ENCODE measurements at regions of chr2 and their contacts with region 1.

Region 1: DNA sequence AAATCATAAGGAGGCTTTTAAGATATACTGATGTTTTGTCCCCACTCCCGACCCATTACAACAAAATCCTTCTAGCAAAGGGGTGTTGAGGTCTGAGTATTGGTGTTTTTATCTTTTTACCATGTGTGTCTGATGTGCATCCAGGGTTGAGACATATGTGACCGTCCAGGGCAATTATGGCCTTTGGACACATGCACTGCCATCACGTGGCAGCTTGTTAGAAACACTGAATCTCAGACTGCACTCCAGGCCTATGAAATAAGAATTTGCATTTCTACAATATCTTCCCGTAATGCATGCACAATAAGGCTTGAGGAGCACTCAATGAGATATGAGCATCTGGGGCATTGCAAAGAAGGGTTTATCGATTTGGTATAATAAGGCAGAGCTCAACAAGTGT is 235.1 kb upstream of the ZNF804A start:
- DNase-seq: peak in 1 of 2 experiments; percentile 11
- H3K4me3 ChIP-seq: no peak overlapping the region
- H3K4me3 Mint-ChIP-seq: no peak overlapping the region
- H3K27ac Mint-ChIP-seq: no peak overlapping the region
- H3K4me1 ChIP-seq: no peaks in the 10 kb centered on the region
- H3K4me1 Mint-ChIP-seq: no peaks in the 10 kb centered on the region
- H3K27me3 ChIP-seq: no peaks in the 10 kb centered on the region
- H3K27me3 Mint-ChIP-seq: peaks cover 3% of the 10 kb centered on the region
- CTCF ChIP-seq: no peak

Region 2: DNA sequence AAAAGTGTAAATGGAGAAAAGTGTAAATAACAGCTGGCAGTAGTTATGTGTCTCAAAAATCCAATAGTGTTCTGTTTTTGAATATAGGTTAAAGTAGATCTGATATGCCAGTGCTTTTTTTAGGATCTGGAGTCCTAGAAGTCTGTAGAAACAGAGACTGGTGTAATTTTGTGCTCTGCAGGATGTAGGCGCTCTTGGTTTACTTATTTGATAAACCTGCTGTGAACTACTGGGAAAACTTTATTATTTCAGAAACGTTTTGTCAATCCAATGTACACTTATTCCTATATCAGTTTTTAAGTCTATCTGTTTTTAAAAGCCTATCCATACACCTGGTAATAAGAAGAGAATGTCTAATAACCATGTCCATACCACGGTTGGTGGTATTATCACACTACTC is 295.7 kb before region 1 on chr2:
- CTCF ChIA-PET with region 1: no interaction called
- POLR2A ChIA-PET with region 1: no interaction called
- intact Hi-C with region 1: loop called (anchors 1 kb)
- DNase-seq: no peak
- H3K4me3 ChIP-seq: no peak overlapping the region
- H3K4me3 Mint-ChIP-seq: no peak overlapping the region
- H3K27ac Mint-ChIP-seq: no peak overlapping the region
- H3K4me1 ChIP-seq: no peaks in the 10 kb centered on the region
- H3K4me1 Mint-ChIP-seq: no peaks in the 10 kb centered on the region
- H3K27me3 ChIP-seq: no peaks in the 10 kb centered on the region
- H3K27me3 Mint-ChIP-seq: peaks cover 7% of the 10 kb centered on the region
- CTCF ChIP-seq: peak in 1 of 2 experiments; percentile 10